Keratinocyte (primary cell): ENCODE measurements at regions of chr16 and their contacts with region 1.

Region 1: GRCh38 chr16:15847611-15848175 is 9.1 kb downstream of the MYH11 start:
- DNase-seq: no peak
- H3K4me3 ChIP-seq: no peak overlapping the region
- H3K27ac ChIP-seq: no peak overlapping the region
- H3K4me1 ChIP-seq: no peaks in the 10 kb centered on the region
- H3K27me3 ChIP-seq: no peaks in the 10 kb centered on the region
- CTCF ChIP-seq: no peak

Region 2: GRCh38 chr16:15782573-15783365 is 64.9 kb before region 1 on chr16:
- dilution Hi-C with region 1: loop called (anchors 5 kb)
- DNase-seq: no peak
- H3K4me3 ChIP-seq: no peak overlapping the region
- H3K27ac ChIP-seq: no peak overlapping the region
- H3K4me1 ChIP-seq: no peaks in the 10 kb centered on the region
- H3K27me3 ChIP-seq: no peaks in the 10 kb centered on the region
- CTCF ChIP-seq: peak in 1 of 3 experiments; percentile 1